ENCODE measurements at regions of chr3 and their contacts with region 1.

Region 1: GRCh38 chr3:56725175-56725574 is 42.1 kb upstream of the TASOR start:
- DNase-seq: peak; percentile 63
- ATAC-seq: peak; percentile 90
- H3K4me3 Mint-ChIP-seq: peak overlapping the region; percentile 75
- H3K27ac Mint-ChIP-seq: peak overlapping the region; percentile 95
- H3K4me1 Mint-ChIP-seq: peaks cover 63% of the 10 kb centered on the region
- H3K27me3 Mint-ChIP-seq: no peaks in the 10 kb centered on the region

Region 2: GRCh38 chr3:56655709-56656108 is 69.5 kb before region 1 on chr3:
- POLR2A ChIA-PET with region 1: no interaction called
- DNase-seq: no peak
- ATAC-seq: no peak
- H3K4me3 Mint-ChIP-seq: no peak overlapping the region
- H3K27ac Mint-ChIP-seq: no peak overlapping the region
- H3K4me1 Mint-ChIP-seq: peaks cover 20% of the 10 kb centered on the region
- H3K27me3 Mint-ChIP-seq: no peaks in the 10 kb centered on the region

Region 3: DNA sequence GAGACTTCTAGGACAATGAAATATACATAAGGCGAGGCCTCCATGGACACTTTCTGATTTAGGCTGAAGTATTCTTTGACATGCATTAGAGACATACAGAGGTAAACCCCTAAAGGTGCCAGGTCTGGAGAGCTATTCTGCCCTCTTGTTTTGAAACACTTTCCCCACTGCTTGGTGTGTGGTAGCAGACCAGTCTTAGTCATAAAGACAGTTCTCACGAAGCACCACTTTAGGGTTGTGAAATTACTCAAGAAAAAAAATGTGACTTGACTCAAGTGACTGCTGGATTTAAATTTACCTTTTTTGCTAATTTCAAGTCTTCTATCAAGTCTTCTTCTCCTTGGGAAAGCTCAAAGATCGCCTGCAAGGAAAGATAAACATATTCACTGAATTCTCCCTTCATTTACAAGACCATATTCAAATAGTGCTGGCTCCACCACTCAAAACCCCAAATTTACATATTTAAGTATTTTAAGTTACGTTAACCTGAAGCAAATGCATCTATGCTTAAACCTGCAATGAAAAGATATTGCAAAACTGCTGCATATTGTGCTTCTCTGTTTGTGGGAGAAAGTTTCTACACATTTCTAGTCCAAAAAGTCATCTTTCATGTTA is 28.1 kb after region 1 on chr3:
- POLR2A ChIA-PET with region 1: interaction called, 34 read pairs
- DNase-seq: no peak
- ATAC-seq: peak; percentile 76
- H3K4me3 Mint-ChIP-seq: peak overlapping the region; percentile 91
- H3K27ac Mint-ChIP-seq: peak overlapping the region; percentile 87
- H3K4me1 Mint-ChIP-seq: peaks cover 61% of the 10 kb centered on the region
- H3K27me3 Mint-ChIP-seq: no peaks in the 10 kb centered on the region

Region 4: GRCh38 chr3:56783644-56784447 is 58.7 kb after region 1 on chr3:
- POLR2A ChIA-PET with region 1: interaction called, 16 read pairs
- DNase-seq: peak; percentile 59
- ATAC-seq: peak; percentile 88
- H3K4me3 Mint-ChIP-seq: peak overlapping the region; percentile 76
- H3K27ac Mint-ChIP-seq: peak overlapping the region; percentile 90
- H3K4me1 Mint-ChIP-seq: peaks cover 85% of the 10 kb centered on the region
- H3K27me3 Mint-ChIP-seq: no peaks in the 10 kb centered on the region

Region 5: GRCh38 chr3:56825567-56826438 is 100.6 kb after region 1 on chr3:
- POLR2A ChIA-PET with region 1: no interaction called
- DNase-seq: no peak
- ATAC-seq: no peak
- H3K4me3 Mint-ChIP-seq: peak overlapping the region; percentile 4
- H3K27ac Mint-ChIP-seq: peak overlapping the region; percentile 3
- H3K4me1 Mint-ChIP-seq: peaks cover 39% of the 10 kb centered on the region
- H3K27me3 Mint-ChIP-seq: no peaks in the 10 kb centered on the region